Ovary (tissue), 10 donors: ENCODE measurements at regions of chr7 and their contacts with region 1.

Region 1: GRCh38 chr7:50793115-50793946 is 10.6 kb upstream of the GRB10 start:
- DNase-seq: peak; percentile 41 to 70 (median 66)
- H3K4me3 ChIP-seq: peak overlapping the region; percentile 50
- H3K27ac ChIP-seq: peak overlapping the region; percentile 53 to 57
- H3K4me1 ChIP-seq: peaks cover 6% of the 10 kb centered on the region
- H3K27me3 ChIP-seq: no peaks in the 10 kb centered on the region
- CTCF ChIP-seq: no peak
- EP300 ChIP-seq: no peak
- POLR2A ChIP-seq: no peak

Region 2: GRCh38 chr7:50467817-50468610 is 325.3 kb before region 1 on chr7:
- intact Hi-C with region 1: loop called in 1 of 4 experiments (anchors 5 kb)
- DNase-seq: peak; percentile 78 to 94 (median 88)
- H3K4me3 ChIP-seq: no peak overlapping the region
- H3K27ac ChIP-seq: no peak overlapping the region
- H3K4me1 ChIP-seq: no peaks in the 10 kb centered on the region
- H3K27me3 ChIP-seq: no peaks in the 10 kb centered on the region
- CTCF ChIP-seq: peak; percentile 81 to 95 (median 92)
- EP300 ChIP-seq: no peak
- POLR2A ChIP-seq: no peak

Region 3: DNA sequence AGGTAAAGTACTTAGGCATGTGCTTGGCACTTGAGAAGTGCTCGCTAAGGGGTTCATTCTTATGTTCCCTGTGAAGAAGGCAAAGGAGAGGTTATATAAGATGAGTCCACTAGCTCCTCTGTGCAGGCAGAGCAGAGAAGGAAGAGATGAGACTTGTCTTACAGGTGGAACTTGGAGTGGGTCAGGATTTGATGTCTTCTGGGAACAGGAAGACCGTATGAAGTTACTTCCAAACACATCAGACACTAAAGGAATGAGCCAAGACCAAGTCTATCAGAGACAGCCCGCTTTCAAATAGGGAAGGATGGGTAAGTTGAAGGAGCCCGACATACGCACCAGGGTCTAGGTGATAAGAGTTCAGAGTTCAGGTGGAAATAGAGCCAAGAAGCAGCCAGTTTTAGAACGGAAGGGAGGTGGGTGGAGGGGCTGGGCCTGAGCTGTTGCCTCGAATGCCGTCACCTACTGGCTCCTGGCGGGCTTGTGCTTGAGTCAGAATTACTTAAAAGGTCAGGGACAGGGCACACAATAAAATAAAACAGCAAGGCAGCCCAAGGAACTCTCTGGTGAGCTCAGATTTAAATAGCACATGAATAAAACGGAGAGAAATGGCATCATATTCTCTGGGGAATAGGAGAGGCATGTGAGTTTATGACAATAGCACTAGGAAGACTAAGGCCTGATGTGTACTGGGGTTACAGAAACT is 45.5 kb after region 1 on chr7:
- intact Hi-C with region 1: no loop called
- DNase-seq: peak; percentile 34 to 61 (median 40)
- H3K4me3 ChIP-seq: no peak overlapping the region
- H3K27ac ChIP-seq: no peak overlapping the region
- H3K4me1 ChIP-seq: no peaks in the 10 kb centered on the region
- H3K27me3 ChIP-seq: no peaks in the 10 kb centered on the region
- CTCF ChIP-seq: no peak
- EP300 ChIP-seq: no peak
- POLR2A ChIP-seq: no peak